Left colon (tissue), 2 donors: ENCODE measurements at regions of chr1 and their contacts with region 1.

Region 1: DNA sequence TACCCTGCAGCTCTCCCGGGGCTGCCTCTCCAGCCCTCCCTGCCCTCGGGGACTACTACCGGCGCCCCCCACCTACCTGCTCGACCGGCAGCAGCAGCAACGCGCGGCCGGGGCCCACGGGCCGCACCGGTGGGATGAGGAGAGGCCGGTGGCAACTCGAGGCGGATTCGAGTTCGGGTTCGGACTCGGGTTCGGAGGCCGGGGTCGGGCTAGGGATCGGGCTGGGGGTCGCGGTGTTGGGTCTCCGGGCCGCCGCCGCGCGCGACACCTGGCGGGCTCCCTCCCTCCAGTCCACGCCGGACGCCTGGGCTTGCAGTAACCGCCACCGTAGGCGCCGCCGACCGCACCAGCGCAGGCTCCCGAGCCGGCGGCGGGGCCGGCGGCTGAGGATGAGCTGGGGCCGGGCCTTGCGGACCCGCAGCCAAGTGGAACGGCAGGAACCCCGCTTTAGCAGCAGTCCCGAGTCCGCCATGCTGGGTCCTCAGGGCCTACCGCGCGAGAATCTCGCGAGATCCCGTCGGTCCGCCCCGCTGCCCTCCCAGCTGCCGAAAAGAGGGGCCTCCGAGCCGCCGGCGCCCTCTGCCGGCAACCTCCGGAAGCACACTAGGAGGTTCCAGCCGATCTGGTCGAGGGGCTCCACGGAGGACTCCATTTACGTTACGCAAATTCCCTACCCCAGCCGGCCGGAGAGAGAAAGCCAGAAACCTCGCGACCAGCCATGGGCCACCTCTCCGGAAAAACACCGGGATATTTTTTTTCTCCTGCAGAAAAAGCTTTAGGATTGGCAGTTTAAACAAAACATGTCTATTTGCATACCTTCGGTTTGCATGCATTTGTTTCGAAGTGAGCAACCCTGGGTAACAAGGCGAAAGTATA is at the start of gene NOL9:
- DNase-seq: peak; percentile 91 to 96
- ATAC-seq: peak; percentile 95
- total RNA-seq, gene NOL9: 18.3 to 18.5 TPM

Region 2: GRCh38 chr1:6634371-6635052 is 80.2 kb after region 1 on chr1:
- intact Hi-C with region 1: loop called in 1 of 2 experiments (anchors 10 kb)
- DNase-seq: peak; percentile 49 to 78
- ATAC-seq: peak; percentile 86